ENCODE measurements at regions of chr6 and their contacts with region 1.

Region 1: GRCh38 chr6:25278914-25279747 is at the start of gene CARMIL1:
- DNase-seq: peak; percentile 78 to 94
- H3K4me3 ChIP-seq: peak within 1 kb of the TSS; percentile 96
- H3K27ac ChIP-seq: peak within 1 kb of the TSS; percentile 62
- H3K4me1 ChIP-seq: peaks cover 21% of the 10 kb centered on the region
- H3K27me3 ChIP-seq: no peaks in the 10 kb centered on the region
- CTCF ChIP-seq: peak; percentile 66
- total RNA-seq, gene CARMIL1: 25.7 and 33.1 TPM in 2 replicates

Region 2: DNA sequence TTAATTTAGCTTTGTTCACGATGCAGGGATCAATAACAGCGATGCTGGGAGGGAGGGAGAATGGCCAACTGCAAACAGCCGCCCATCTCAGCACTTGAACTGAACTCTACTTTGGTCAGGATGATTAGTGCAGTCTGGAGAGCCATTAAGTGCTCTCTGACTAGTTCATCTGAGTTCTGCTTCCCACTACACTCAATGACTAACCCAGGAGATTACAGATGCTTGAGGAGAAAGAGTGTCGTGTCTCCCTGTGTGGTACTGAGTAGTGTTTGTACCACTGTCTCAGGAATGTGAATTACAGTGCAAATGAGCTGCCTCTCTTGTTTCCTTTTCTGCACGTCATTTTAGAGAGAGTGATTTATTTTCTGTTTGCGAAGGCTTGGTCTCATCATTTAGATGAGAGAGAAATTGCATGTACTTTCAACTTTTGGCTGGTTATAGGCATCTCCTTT is 23.6 kb after region 1 on chr6:
- CTCF ChIA-PET with region 1: no interaction called
- POLR2A ChIA-PET with region 1: interaction called, 20 read pairs
- intact Hi-C with region 1: no loop called
- DNase-seq: no peak
- H3K4me3 ChIP-seq: no peak overlapping the region
- H3K27ac ChIP-seq: no peak overlapping the region
- H3K4me1 ChIP-seq: no peaks in the 10 kb centered on the region
- H3K27me3 ChIP-seq: no peaks in the 10 kb centered on the region
- CTCF ChIP-seq: no peak

Region 3: GRCh38 chr6:25312703-25313501 is 33.8 kb after region 1 on chr6:
- CTCF ChIA-PET with region 1: interaction called, 4 read pairs
- POLR2A ChIA-PET with region 1: interaction called, 16 read pairs
- intact Hi-C with region 1: loop called (anchors 1 kb)
- DNase-seq: peak; percentile 32 to 76
- H3K4me3 ChIP-seq: peak overlapping the region; percentile 11; the same call in 1 of the 2 replicates
- H3K27ac ChIP-seq: peak overlapping the region; percentile 54
- H3K4me1 ChIP-seq: peaks cover 37% of the 10 kb centered on the region
- H3K27me3 ChIP-seq: no peaks in the 10 kb centered on the region
- CTCF ChIP-seq: no peak

Region 4: GRCh38 chr6:25472306-25472705 is 193.2 kb after region 1 on chr6:
- CTCF ChIA-PET with region 1: interaction called, 13 read pairs
- POLR2A ChIA-PET with region 1: interaction called, 18 read pairs
- intact Hi-C with region 1: no loop called
- DNase-seq: no peak
- H3K4me3 ChIP-seq: no peak overlapping the region
- H3K27ac ChIP-seq: no peak overlapping the region
- H3K4me1 ChIP-seq: no peaks in the 10 kb centered on the region
- H3K27me3 ChIP-seq: no peaks in the 10 kb centered on the region
- CTCF ChIP-seq: peak; percentile 49; the same call in 1 of the 2 replicates

Region 5: DNA sequence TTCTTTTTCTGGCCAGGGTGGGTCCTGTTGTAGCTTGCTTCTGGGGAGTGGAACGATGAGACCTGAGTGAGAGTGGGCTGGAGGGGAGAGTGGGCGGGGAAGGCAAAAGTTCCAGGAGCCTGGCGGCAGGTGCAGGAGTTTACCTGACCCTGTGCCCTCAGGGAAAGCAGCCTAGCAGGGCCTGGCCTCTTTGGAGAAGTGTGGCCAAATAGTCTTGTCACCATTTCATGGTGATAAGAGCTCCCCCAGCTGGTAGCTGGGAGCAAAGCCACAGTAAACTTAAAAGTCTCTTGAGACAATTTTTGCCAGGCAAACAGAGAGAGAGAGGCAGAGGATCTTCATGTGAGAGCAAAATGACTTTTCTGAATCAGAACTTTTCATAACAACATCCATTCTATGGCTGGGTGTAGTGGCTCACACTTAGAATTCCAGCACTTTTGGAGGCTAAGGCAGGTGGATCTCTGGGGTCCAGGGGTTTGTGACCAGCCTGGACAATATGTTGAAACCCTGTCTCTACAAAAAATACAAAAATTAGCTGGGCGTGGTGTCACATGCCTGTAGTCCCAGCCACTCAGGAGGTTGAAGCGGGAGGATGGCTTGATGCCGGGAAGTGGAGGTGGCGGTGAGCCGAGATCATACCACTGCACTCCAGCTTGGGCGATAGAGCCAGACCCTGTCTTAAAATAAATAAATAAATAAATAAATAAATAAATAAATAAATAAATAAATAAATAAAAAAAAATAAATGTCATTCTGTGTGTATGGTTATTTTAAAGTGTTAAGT is 211.1 kb after region 1 on chr6:
- CTCF ChIA-PET with region 1: interaction called, 17 read pairs
- POLR2A ChIA-PET with region 1: no interaction called
- intact Hi-C with region 1: loop called (anchors 1 kb)
- DNase-seq: peak; percentile 68 to 73
- H3K4me3 ChIP-seq: no peak overlapping the region
- H3K27ac ChIP-seq: no peak overlapping the region
- H3K4me1 ChIP-seq: peaks cover 4% of the 10 kb centered on the region
- H3K27me3 ChIP-seq: no peaks in the 10 kb centered on the region
- CTCF ChIP-seq: peak; percentile 85

Measured in PC-9 (cell line).